CD4-positive, alpha-beta memory T cell (primary cell): ENCODE measurements at regions of chr3 and their contacts with region 1.

Region 1: DNA sequence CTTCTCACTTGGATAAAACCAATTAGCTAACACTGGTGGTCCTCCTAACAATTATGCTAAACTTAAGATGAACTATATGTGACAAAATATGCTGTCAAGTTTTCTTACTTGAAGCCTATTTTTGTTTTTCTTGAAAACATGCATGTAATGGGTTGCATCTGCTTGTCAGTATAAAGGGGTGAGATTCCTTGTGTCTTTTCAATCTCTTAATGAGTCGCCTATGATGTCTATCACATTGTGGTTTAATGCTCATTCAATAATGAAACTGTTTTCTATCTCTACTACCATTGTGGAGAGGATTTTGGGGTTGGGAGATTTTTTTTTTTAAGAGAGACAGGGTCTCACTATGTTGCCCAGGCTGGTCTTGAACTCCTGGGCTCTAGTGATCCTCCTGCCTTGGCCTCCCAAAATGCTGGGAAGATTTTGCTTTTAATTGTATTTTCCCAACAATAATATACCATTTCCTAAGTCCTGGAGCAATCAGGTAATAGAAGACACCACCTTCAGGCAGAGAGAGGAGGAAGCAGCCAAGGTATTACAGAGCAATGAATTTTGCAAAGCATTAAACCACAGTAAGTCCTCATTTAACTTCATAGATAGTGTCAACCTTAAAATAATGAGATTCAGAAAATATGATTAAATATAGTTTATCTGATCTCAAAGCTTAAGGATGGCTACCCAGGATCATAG is 17.4 kb upstream of the TRMT10C start:
- DNase-seq: peak in 2 of 5 donors; percentile 18 to 22
- H3K4me3 ChIP-seq: no peak overlapping the region
- H3K4me3 Mint-ChIP-seq: peak overlapping the region in 7 of 8 donors; percentile 2 to 66 (median 23)
- H3K27ac ChIP-seq: no peak overlapping the region
- H3K27ac Mint-ChIP-seq: peak overlapping the region; percentile 48 to 94 (median 78)
- H3K4me1 ChIP-seq: peaks cover 34% of the 10 kb centered on the region
- H3K4me1 Mint-ChIP-seq: peaks cover 29 to 48% (median 37%) of the 10 kb centered on the region in 4 donors
- H3K27me3 ChIP-seq: no peaks in the 10 kb centered on the region
- H3K27me3 Mint-ChIP-seq: no peaks in the 10 kb centered on the region

Region 2: GRCh38 chr3:101381809-101382208 is 162.5 kb before region 1 on chr3:
- CTCF ChIA-PET with region 1: no interaction called
- POLR2A ChIA-PET with region 1: no interaction called
- intact Hi-C with region 1: loop called (anchors 5 kb)
- DNase-seq: peak in 4 of 5 donors; percentile 25 to 40 (median 32)
- H3K4me3 ChIP-seq: no peak overlapping the region
- H3K4me3 Mint-ChIP-seq: no peak overlapping the region
- H3K27ac ChIP-seq: no peak overlapping the region
- H3K27ac Mint-ChIP-seq: peak overlapping the region in 2 of 7 donors; percentile 5 to 57
- H3K4me1 ChIP-seq: peaks cover 21% of the 10 kb centered on the region
- H3K4me1 Mint-ChIP-seq: peaks cover 37 to 66% (median 52%) of the 10 kb centered on the region in 4 donors
- H3K27me3 ChIP-seq: no peaks in the 10 kb centered on the region
- H3K27me3 Mint-ChIP-seq: no peaks in the 10 kb centered on the region

Region 3: DNA sequence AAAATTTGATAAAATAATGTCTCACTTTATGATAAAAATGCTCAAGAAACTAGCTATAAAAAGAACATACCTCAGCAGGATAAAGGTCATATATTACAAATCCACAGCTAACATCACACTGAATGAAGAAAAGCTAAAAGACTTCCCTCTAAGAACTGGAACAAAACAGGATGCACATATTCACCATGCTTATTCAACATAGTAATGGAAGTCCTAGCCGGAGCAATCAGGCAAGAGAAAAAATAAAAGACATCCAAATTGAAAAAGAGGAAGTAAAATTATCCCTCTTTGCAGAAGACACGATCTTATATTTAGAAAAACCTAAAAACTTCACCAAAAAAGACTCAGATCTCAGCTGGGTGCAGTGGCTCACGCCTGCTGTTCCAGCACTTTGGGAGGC is 65.3 kb before region 1 on chr3:
- CTCF ChIA-PET with region 1: no interaction called
- POLR2A ChIA-PET with region 1: no interaction called
- intact Hi-C with region 1: no loop called
- DNase-seq: no peak
- H3K4me3 ChIP-seq: no peak overlapping the region
- H3K4me3 Mint-ChIP-seq: peak overlapping the region in 4 of 8 donors; percentile 2 to 63 (median 26)
- H3K27ac ChIP-seq: no peak overlapping the region
- H3K27ac Mint-ChIP-seq: peak overlapping the region in 4 of 7 donors; percentile 54 to 79 (median 74)
- H3K4me1 ChIP-seq: peaks cover 26% of the 10 kb centered on the region
- H3K4me1 Mint-ChIP-seq: peaks cover 48 to 90% (median 66%) of the 10 kb centered on the region in 4 donors
- H3K27me3 ChIP-seq: no peaks in the 10 kb centered on the region
- H3K27me3 Mint-ChIP-seq: no peaks in the 10 kb centered on the region

Region 4: GRCh38 chr3:101512646-101513418 is 31.5 kb before region 1 on chr3 and contains the start of gene SENP7:
- CTCF ChIA-PET with region 1: interaction called, 19 read pairs
- POLR2A ChIA-PET with region 1: interaction called, 49 read pairs
- intact Hi-C with region 1: loop called (anchors 1 kb)
- DNase-seq: peak; percentile 75 to 81 (median 77)
- H3K4me3 ChIP-seq: peak within 1 kb of the TSS; percentile 83 to 88
- H3K4me3 Mint-ChIP-seq: peak within 1 kb of the TSS; percentile 98 to 100 (median 99)
- H3K27ac ChIP-seq: peak within 1 kb of the TSS; percentile 84
- H3K27ac Mint-ChIP-seq: peak within 1 kb of the TSS; percentile 98 to 100 (median 99)
- H3K4me1 ChIP-seq: peaks cover 54% of the 10 kb centered on the region
- H3K4me1 Mint-ChIP-seq: peaks cover 24 to 73% (median 51%) of the 10 kb centered on the region in 4 donors
- H3K27me3 ChIP-seq: no peaks in the 10 kb centered on the region
- H3K27me3 Mint-ChIP-seq: peaks cover 1 to 2% of the 10 kb centered on the region in 2 donors
- total RNA-seq, gene SENP7: 69.7 to 69.8 TPM

Region 5: DNA sequence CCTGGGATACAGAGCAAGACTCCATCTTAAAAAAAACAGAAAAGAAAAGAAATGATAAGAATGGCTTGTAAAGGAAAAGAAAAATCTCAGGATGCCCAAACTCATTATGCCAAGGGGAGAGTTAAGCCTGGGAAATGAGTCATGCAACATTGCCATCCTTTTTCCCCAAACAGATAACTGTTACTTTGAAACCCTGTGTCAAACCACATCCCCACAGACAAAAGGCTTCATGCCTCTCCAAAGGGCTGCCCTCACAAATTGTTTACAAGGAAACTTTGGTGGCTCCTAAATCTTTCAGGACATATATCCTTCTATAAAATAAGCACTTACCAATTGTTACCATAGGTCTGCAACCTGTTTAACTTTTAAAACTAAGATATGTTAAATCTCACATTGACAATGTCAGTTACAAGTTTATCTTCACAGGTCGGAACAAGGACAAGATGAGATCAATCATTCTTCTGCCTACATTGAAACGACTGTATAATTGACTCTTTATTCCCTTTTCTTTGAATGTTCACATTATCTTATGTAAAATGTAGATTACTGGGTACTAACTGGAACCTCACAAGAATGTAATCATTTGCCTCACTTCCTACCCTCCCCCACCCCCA is 12.7 kb before region 1 on chr3:
- CTCF ChIA-PET with region 1: interaction called, 5 read pairs
- POLR2A ChIA-PET with region 1: interaction called, 12 read pairs
- intact Hi-C with region 1: loop called (anchors 2 kb)
- DNase-seq: peak in 2 of 5 donors; percentile 21 to 51
- H3K4me3 ChIP-seq: no peak overlapping the region
- H3K4me3 Mint-ChIP-seq: peak overlapping the region in 6 of 8 donors; percentile 9 to 72 (median 46)
- H3K27ac ChIP-seq: no peak overlapping the region
- H3K27ac Mint-ChIP-seq: peak overlapping the region; percentile 63 to 93 (median 89)
- H3K4me1 ChIP-seq: peaks cover 40% of the 10 kb centered on the region
- H3K4me1 Mint-ChIP-seq: peaks cover 35 to 42% (median 41%) of the 10 kb centered on the region in 4 donors
- H3K27me3 ChIP-seq: no peaks in the 10 kb centered on the region
- H3K27me3 Mint-ChIP-seq: no peaks in the 10 kb centered on the region

Region 6: DNA sequence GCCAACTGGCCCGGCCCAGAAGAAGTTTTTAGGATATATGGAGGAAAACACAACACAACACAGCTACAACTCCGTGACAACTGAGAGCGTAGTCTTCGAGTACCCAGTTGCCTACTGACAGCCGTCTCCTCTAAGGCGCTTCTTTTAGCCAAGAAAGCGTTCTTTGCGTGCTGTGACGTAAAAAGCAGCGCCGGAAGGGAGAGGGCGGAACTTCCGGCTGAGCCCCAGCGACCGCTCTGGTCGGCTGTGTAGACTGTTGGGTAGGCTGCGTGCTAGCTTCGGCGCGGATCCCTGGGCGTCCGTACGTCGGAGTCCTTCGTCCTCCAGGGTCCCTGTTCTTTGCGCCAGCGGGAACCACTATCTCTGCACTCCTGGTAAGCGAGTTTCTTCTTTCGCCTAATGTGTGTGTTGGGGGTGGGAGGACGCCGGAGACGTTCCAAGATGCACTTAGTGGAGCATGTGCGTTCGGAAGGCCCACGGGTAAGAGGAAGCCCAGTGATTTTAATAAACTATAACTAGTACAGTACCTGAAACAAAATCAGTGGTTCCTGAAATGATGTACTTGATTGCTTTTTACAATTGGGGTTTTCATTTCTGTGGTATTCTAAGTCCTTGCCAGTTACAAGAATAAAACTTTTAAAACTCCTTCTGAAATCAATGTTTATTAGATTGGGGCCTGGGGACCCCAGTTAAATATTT is 17.5 kb after region 1 on chr3 and contains the start of gene TRMT10C:
- CTCF ChIA-PET with region 1: no interaction called
- POLR2A ChIA-PET with region 1: interaction called, 17 read pairs
- intact Hi-C with region 1: no loop called
- DNase-seq: peak; percentile 91 to 95 (median 93)
- H3K4me3 ChIP-seq: peak within 1 kb of the TSS; percentile 95 to 100
- H3K4me3 Mint-ChIP-seq: peak within 1 kb of the TSS; percentile 97 to 100 (median 99)
- H3K27ac ChIP-seq: peak within 1 kb of the TSS; percentile 79
- H3K27ac Mint-ChIP-seq: peak within 1 kb of the TSS; percentile 95 to 99 (median 99)
- H3K4me1 ChIP-seq: peaks cover 22% of the 10 kb centered on the region
- H3K4me1 Mint-ChIP-seq: peaks cover 13 to 41% (median 30%) of the 10 kb centered on the region in 4 donors
- H3K27me3 ChIP-seq: no peaks in the 10 kb centered on the region
- H3K27me3 Mint-ChIP-seq: peaks cover 4% of the 10 kb centered on the region in 2 donors
- total RNA-seq, gene TRMT10C: 23.3 to 24.8 TPM